ENCODE measurements at regions of chr11 and their contacts with region 1.

Region 1: DNA sequence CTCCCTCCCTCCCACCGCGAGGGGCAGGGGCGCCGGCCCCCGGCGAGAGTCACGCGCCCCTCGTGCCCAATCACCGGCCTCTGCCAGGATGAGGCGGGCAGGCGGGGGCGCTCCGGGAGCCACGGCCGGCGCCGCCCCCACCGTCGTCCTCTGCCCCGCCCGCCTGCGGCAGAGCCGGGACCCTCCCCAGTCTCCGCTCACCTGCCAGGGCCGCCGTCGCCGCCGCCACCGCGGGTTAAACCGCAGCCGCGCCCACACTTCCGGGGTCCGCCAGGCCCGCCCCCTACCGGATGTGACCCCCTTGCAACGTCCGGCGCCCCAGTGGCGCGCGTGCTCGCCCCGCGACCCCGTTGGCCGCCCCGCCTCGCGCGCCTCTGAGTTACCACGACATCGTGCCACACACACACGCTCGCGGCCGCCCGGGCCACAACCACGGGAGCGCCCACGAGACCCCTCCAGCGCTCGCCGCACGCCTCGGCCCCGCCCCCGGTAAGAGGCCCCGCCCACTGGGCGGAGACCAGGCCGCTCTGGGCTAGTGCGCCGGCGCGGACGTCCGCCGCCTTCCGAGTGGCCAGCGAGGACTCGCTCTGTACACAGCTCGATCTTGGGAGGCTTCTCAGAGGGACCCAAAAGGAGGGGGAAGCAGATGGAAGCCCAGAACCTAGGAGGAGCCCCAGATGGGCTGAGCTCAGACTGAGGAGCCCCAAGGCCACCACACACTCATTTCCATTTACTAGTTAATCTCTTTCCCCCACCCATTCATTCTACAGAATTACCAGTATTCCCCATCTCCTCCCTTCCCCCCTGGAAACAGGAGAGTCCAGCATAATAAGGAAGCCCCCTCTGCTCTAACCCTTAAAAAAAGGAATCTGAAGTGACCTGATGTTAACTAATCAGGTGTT is at the start of gene VPS37C:
- DNase-seq: peak; percentile 96
- ATAC-seq: peak; percentile 81
- H3K4me3 Mint-ChIP-seq: peak within 1 kb of the TSS; percentile 91
- H3K27ac Mint-ChIP-seq: peak within 1 kb of the TSS; percentile 95
- H3K4me1 Mint-ChIP-seq: peaks cover 62% of the 10 kb centered on the region
- H3K27me3 Mint-ChIP-seq: no peaks in the 10 kb centered on the region
- total RNA-seq, gene VPS37C: 9.5 to 10.6 TPM

Region 2: DNA sequence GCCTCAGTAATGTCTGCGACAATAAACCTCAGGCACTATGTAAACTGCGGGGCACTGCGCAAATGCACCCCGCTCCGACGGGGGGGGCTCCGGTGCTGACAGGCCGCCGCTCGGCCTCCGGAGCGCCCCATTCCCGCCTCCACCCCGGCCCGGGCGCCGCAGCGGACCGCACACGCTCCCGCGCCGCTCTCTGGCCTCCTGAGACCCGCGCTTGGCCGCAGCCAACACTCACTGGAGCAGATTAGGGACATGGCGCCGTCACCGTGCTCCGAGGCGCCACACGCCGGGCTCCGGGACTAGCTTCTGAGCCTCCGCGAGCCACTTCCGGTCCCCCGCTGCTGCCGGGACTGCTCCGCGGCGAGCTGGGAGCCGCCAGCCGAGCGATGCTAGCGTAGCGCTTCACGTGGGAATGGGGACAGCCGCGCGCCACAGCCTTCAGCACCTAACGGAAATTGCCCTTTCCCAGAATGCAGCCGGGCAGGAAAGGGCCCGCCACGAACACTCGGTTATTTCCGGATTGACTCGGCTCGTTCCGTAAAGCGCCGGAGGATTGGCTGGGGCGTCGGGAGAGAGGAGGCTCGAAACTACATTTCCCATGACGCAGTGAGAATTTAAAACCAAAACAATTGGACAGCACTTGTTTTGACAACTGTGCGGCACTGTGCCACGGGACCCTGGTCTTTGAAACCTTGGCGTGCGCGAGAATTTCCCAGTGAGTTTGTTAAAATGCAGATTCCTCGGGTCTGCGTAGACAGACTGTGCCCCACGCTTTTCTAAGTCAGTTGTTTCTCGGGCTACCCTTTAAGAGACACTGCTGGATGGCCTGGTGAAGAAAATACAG is 255.1 kb before region 1 on chr11 and contains the start of gene PRPF19:
- CTCF ChIA-PET with region 1: no interaction called
- POLR2A ChIA-PET with region 1: no interaction called
- intact Hi-C with region 1: loop called (anchors 1 to 2 kb)
- DNase-seq: peak; percentile 99
- ATAC-seq: peak; percentile 97
- H3K4me3 Mint-ChIP-seq: peak within 1 kb of the TSS; percentile 86
- H3K27ac Mint-ChIP-seq: peak within 1 kb of the TSS; percentile 94
- H3K4me1 Mint-ChIP-seq: peaks cover 41% of the 10 kb centered on the region
- H3K27me3 Mint-ChIP-seq: no peaks in the 10 kb centered on the region
- total RNA-seq, gene PRPF19: 148 to 197 TPM

Region 3: GRCh38 chr11:60985991-60986915 is 175.2 kb before region 1 on chr11:
- CTCF ChIA-PET with region 1: no interaction called
- POLR2A ChIA-PET with region 1: interaction called, 3 read pairs
- intact Hi-C with region 1: loop called in 1 of 2 experiments (anchors 1 kb)
- DNase-seq: peak; percentile 97
- ATAC-seq: peak; percentile 76
- H3K4me3 Mint-ChIP-seq: peak overlapping the region; percentile 87
- H3K27ac Mint-ChIP-seq: peak overlapping the region; percentile 96
- H3K4me1 Mint-ChIP-seq: peaks cover 94% of the 10 kb centered on the region
- H3K27me3 Mint-ChIP-seq: no peaks in the 10 kb centered on the region

Region 4: GRCh38 chr11:61061081-61061826 is 100.2 kb before region 1 on chr11:
- CTCF ChIA-PET with region 1: no interaction called
- POLR2A ChIA-PET with region 1: no interaction called
- intact Hi-C with region 1: loop called (anchors 1 kb)
- DNase-seq: peak; percentile 93
- ATAC-seq: peak; percentile 79
- H3K4me3 Mint-ChIP-seq: peak overlapping the region; percentile 51
- H3K27ac Mint-ChIP-seq: peak overlapping the region; percentile 96
- H3K4me1 Mint-ChIP-seq: peaks cover 94% of the 10 kb centered on the region
- H3K27me3 Mint-ChIP-seq: no peaks in the 10 kb centered on the region

Region 5: DNA sequence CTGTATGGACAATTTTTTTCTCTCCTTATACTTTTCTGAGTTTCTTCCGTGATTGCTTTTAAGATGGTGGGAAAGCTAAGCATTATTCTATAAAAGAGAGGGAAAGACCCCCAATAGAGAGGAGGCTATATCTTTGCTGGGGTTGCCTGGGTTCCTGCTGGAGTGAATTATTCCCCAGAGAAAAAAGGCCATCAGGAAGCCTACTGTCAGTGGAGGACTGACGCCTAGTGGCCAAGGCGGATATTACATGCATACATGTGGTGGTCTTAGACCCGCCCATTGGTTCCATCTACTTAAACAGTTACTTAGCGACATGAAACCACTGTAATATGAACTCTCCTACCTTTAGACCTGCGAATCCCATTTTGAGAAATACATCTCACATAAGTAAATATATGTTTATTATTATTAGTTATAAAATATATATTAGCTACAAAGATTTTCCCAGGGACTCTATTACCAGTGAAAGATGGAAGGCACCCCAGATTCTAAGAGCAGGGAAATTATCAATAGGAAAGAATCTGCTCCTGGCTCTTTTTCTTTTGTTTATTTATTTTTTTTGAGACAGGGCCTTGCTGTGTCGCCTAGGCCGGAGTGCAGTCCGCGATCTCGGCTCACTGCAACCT is 26.2 kb after region 1 on chr11:
- CTCF ChIA-PET with region 1: interaction called, 8 read pairs
- POLR2A ChIA-PET with region 1: no interaction called
- intact Hi-C with region 1: loop called in 1 of 2 experiments (anchors 1 kb)
- DNase-seq: peak; percentile 89
- ATAC-seq: peak; percentile 92
- H3K4me3 Mint-ChIP-seq: no peak overlapping the region
- H3K27ac Mint-ChIP-seq: no peak overlapping the region
- H3K4me1 Mint-ChIP-seq: peaks cover 2% of the 10 kb centered on the region
- H3K27me3 Mint-ChIP-seq: peaks cover 3% of the 10 kb centered on the region

Region 6: GRCh38 chr11:61429691-61430582 is 268.5 kb after region 1 on chr11 and contains the starts of genes CPSF7 and SDHAF2:
- CTCF ChIA-PET with region 1: no interaction called
- POLR2A ChIA-PET with region 1: no interaction called
- intact Hi-C with region 1: loop called in 1 of 2 experiments (anchors 1 kb)
- DNase-seq: peak; percentile 99
- ATAC-seq: peak; percentile 92
- H3K4me3 Mint-ChIP-seq: peak within 1 kb of the TSS; percentile 92
- H3K27ac Mint-ChIP-seq: peak within 1 kb of the TSS; percentile 97
- H3K4me1 Mint-ChIP-seq: peaks cover 59% of the 10 kb centered on the region
- H3K27me3 Mint-ChIP-seq: no peaks in the 10 kb centered on the region
- total RNA-seq, gene CPSF7: 108 to 179 TPM
- total RNA-seq, gene SDHAF2: 23.6 to 33.6 TPM

Measured in activated CD4-positive, alpha-beta T cell treated with anti-CD3 and anti-CD28 coated beads for 36 hours (primary cell).